Right cardiac atrium (tissue), 5 donors: ENCODE measurements at regions of chr11 and their contacts with region 1.

Region 1: GRCh38 chr11:73177778-73178577 is 35.9 kb upstream of the FCHSD2 start:
- DNase-seq: peak; percentile 91 to 95 (median 94)
- ATAC-seq: peak; percentile 83 to 85
- H3K4me3 ChIP-seq: no peak overlapping the region
- H3K27ac ChIP-seq: peak overlapping the region; percentile 77
- H3K4me1 ChIP-seq: peaks cover 21% of the 10 kb centered on the region
- H3K27me3 ChIP-seq: no peaks in the 10 kb centered on the region

Region 2: GRCh38 chr11:72722050-72722748 is 455.8 kb before region 1 on chr11:
- intact Hi-C with region 1: loop called in 2 of 4 experiments (anchors 10 kb)
- DNase-seq: peak; percentile 89 to 95 (median 94)
- ATAC-seq: peak; percentile 85 to 88
- H3K4me3 ChIP-seq: peak overlapping the region; percentile 53
- H3K27ac ChIP-seq: peak overlapping the region; percentile 99
- H3K4me1 ChIP-seq: peaks cover 20% of the 10 kb centered on the region
- H3K27me3 ChIP-seq: no peaks in the 10 kb centered on the region

Region 3: DNA sequence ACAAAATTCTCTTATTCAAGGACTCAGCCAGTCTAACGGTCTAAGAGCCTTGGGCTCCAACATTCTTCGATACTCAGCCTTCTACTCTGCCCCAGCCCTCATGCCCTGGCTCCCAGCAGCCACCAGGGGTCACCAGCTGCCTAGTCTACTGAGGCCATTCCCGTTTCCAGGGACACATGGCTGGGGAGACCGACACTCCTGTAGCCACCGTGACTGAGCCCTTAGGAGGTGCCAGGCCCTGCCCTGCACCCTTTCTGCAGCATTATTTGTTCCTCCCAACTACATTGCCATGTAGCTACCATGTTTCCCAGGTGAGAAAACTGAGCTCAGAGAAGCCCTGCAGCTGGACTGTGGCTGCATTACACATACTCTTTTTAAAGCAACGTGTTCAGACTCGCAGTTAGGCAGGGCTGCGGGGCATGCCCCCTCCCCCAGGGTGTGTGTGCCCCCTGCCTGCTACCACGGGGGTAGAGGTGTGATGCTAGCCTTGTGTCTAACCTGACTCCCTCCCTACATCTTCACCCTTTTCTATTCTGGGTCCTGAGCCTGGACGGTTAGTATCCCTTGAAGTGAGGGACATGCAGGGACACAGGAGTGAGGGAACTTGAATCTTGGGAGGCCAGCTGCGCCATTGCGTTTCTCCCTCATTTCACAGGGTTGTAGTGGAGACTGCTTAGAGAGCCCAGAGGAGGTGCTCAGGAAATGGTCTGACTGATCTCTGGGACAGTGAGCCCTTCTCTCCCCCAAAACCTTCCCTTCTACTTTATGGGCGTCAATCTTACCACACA is 346.3 kb before region 1 on chr11:
- intact Hi-C with region 1: loop called (anchors 2 to 5 kb)
- DNase-seq: peak; percentile 87 to 95 (median 94)
- ATAC-seq: peak; percentile 77 to 79
- H3K4me3 ChIP-seq: no peak overlapping the region
- H3K27ac ChIP-seq: peak overlapping the region; percentile 44
- H3K4me1 ChIP-seq: peaks cover 33% of the 10 kb centered on the region
- H3K27me3 ChIP-seq: no peaks in the 10 kb centered on the region

Region 4: GRCh38 chr11:72924568-72925190 is 253.3 kb before region 1 on chr11:
- intact Hi-C with region 1: loop called in 1 of 4 experiments (anchors 10 kb)
- DNase-seq: no peak
- ATAC-seq: peak; percentile 38 to 44
- H3K4me3 ChIP-seq: no peak overlapping the region
- H3K27ac ChIP-seq: no peak overlapping the region
- H3K4me1 ChIP-seq: peaks cover 5% of the 10 kb centered on the region
- H3K27me3 ChIP-seq: no peaks in the 10 kb centered on the region

Region 5: DNA sequence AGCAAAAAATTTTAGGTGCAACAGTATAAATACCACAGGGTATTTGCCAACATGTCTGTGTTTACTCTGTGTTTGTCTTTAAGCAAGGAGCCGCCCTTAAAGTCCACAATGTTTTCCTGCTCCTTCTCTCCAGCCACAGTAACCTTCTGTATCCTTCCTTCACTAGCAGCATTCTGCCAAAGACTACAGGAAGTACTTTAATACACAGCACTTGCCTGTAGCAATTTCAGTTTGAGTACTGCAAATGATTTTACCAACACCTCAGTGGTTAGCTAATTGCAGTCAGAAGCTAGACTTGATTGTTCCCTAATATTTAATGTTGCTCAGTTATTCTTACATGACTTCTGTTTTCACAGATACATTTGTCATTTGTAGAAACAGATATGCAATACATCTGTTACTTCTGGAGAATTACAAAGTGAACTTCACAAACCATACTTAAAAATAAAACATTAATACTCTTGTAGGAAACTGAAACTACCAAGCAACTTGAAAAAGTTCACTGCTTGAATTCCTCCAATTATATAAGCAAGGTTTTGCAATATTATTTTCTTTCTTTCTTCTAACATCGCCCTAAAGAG is 105.0 kb before region 1 on chr11:
- intact Hi-C with region 1: no loop called
- DNase-seq: no peak
- ATAC-seq: peak; percentile 88 to 90
- H3K4me3 ChIP-seq: no peak overlapping the region
- H3K27ac ChIP-seq: no peak overlapping the region
- H3K4me1 ChIP-seq: no peaks in the 10 kb centered on the region
- H3K27me3 ChIP-seq: no peaks in the 10 kb centered on the region

Region 6: GRCh38 chr11:73121692-73122091 is 56.3 kb before region 1 on chr11:
- intact Hi-C with region 1: no loop called
- DNase-seq: no peak
- ATAC-seq: no peak
- H3K4me3 ChIP-seq: no peak overlapping the region
- H3K27ac ChIP-seq: no peak overlapping the region
- H3K4me1 ChIP-seq: peaks cover 3% of the 10 kb centered on the region
- H3K27me3 ChIP-seq: no peaks in the 10 kb centered on the region

Region 7: DNA sequence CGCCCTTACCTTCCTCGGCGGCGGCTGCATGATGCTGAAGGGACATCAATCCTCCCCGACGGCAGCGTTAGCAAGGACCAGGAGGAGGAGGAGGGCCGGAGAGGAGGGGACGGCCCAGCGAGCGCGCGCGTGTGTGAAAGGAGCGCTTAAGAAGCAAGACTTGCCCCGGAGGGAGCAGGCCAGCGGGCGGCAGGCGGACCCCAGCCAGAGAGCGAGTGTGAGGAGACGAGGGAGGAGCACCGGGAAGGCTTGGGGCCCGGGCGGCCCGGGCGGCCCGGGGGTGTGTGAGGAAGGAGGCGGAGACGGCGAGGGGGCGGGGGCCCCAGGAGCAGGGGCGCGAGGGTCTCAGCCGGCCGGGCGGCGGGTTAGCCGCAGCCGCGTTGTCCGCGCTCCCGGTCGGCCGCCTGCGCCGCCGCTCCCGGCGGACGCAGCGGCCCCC is 36.1 kb before region 1 on chr11:
- intact Hi-C with region 1: loop called in 3 of 4 experiments (anchors 5 kb)
- DNase-seq: peak; percentile 85 to 95 (median 93)
- ATAC-seq: peak; percentile 66 to 69
- H3K4me3 ChIP-seq: peak overlapping the region; percentile 66
- H3K27ac ChIP-seq: peak overlapping the region; percentile 59
- H3K4me1 ChIP-seq: no peaks in the 10 kb centered on the region
- H3K27me3 ChIP-seq: no peaks in the 10 kb centered on the region